GM12878 (cell line): ENCODE measurements at regions of chr17 and their contacts with region 1.

Region 1: GRCh38 chr17:78128551-78129350 is at the start of gene TMC6:
- DNase-seq: no peak
- ATAC-seq: peak; percentile 13
- H3K4me3 ChIP-seq: peak within 1 kb of the TSS; percentile 94
- H3K27ac ChIP-seq: peak within 1 kb of the TSS; percentile 95
- H3K4me1 ChIP-seq: peaks cover 61% of the 10 kb centered on the region
- H3K27me3 ChIP-seq: no peaks in the 10 kb centered on the region
- CTCF ChIP-seq: no peak
- EP300 ChIP-seq: peak in 1 of 2 experiments; percentile 9; a peak in 1 of 4 replicates
- POLR2A ChIP-seq: peak; percentile 89
- RAD21 ChIP-seq: no peak
- polyA plus RNA-seq, gene TMC6: 1.9 to 11.5 TPM

Region 2: DNA sequence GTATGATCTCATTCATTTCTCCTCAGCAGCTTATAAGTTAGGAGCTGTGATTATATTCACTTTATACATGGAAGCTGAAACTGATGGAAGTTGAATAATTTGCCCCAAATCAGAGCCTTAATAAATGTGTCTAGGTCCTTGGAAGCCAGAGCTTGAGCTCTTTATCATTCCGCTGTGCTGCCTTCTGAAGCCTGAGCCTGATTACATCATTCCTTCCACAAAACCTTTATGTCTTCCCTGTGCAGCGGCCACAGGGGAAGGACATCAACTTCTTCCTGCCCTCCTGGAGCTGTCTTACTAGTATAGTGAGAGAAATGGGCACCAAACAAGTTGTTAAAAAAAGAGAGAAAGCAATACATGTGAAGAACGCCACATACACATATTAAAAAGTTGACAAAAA is 163.4 kb before region 1 on chr17:
- CTCF ChIA-PET with region 1: no interaction called
- POLR2A ChIA-PET with region 1: no interaction called
- RAD21 ChIA-PET with region 1: no interaction called
- SMC1A ChIA-PET with region 1: no interaction called
- in situ Hi-C with region 1: no loop called
- intact Hi-C with region 1: no loop called
- DNase-seq: no peak
- ATAC-seq: no peak
- H3K4me3 ChIP-seq: no peak overlapping the region
- H3K27ac ChIP-seq: no peak overlapping the region
- H3K4me1 ChIP-seq: peaks cover 10% of the 10 kb centered on the region
- H3K27me3 ChIP-seq: no peaks in the 10 kb centered on the region
- CTCF ChIP-seq: no peak
- EP300 ChIP-seq: no peak
- POLR2A ChIP-seq: no peak
- RAD21 ChIP-seq: no peak

Region 3: GRCh38 chr17:78112518-78113226 is 16.1 kb before region 1 on chr17:
- CTCF ChIA-PET with region 1: interaction called, 24 read pairs
- POLR2A ChIA-PET with region 1: interaction called, 8 read pairs
- RAD21 ChIA-PET with region 1: interaction called, 6 read pairs
- SMC1A ChIA-PET with region 1: interaction called, 5 read pairs
- in situ Hi-C with region 1: no loop called
- intact Hi-C with region 1: loop called (anchors 2 kb)
- DNase-seq: no peak
- ATAC-seq: peak; percentile 84
- H3K4me3 ChIP-seq: no peak overlapping the region
- H3K27ac ChIP-seq: no peak overlapping the region; the same call in 1 of the 2 replicates
- H3K4me1 ChIP-seq: peaks cover 27% of the 10 kb centered on the region
- H3K27me3 ChIP-seq: no peaks in the 10 kb centered on the region
- CTCF ChIP-seq: peak; percentile 93 to 99 (median 96); a peak in 5 of 6 replicates
- EP300 ChIP-seq: no peak
- POLR2A ChIP-seq: peak; percentile 77
- RAD21 ChIP-seq: peak; percentile 96

Region 4: DNA sequence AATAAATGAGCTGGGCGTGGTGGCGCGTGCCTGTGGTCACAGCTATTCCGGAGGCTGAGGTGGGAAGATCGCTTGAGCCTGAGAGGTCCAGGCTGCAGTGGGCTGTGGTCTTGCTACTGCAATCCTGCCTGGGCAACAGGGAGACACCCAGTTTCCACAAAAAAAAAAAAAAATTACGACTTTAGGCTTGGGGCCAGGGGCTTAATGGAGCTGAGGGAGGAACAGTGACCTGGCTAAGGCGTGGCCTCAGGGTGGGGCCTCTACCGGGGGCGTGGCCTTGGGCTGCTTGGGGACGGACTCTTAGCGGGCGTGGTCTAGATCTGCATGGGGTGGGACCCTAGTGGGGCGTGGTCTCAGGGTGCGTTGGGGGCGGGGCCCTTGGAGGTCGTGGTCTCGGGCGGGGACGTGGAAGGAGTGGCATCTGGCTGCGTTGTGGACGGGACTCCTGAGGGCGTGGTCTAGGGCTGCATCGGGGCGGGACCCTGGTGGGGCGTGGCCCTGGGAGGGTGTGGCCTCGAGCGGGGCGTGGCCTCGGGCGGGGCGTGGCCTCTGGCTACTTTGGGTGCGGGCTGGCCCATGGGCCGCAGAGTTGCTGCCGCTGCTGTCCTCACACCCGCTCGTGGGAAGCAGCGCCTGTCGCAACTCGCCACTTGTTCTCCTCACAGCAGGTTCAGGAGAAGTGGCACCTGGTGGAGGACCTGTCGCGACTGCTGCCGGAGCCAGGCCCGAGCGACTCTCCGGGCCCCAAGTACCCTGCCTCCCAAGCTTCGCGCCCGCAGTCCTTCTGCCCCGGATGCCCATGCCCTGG is 11.6 kb after region 1 on chr17:
- CTCF ChIA-PET with region 1: interaction called, 66 read pairs
- POLR2A ChIA-PET with region 1: interaction called, 15 read pairs
- RAD21 ChIA-PET with region 1: interaction called, 26 read pairs
- SMC1A ChIA-PET with region 1: interaction called, 14 read pairs
- in situ Hi-C with region 1: no loop called
- intact Hi-C with region 1: no loop called
- DNase-seq: peak; percentile 90
- ATAC-seq: peak; percentile 90
- H3K4me3 ChIP-seq: no peak overlapping the region
- H3K27ac ChIP-seq: no peak overlapping the region
- H3K4me1 ChIP-seq: peaks cover 64% of the 10 kb centered on the region
- H3K27me3 ChIP-seq: no peaks in the 10 kb centered on the region
- CTCF ChIP-seq: no peak
- EP300 ChIP-seq: no peak
- POLR2A ChIP-seq: peak; percentile 87
- RAD21 ChIP-seq: no peak

Region 5: GRCh38 chr17:78147315-78147998 is 18.7 kb after region 1 on chr17:
- CTCF ChIA-PET with region 1: interaction called, 11 read pairs
- POLR2A ChIA-PET with region 1: interaction called, 15 read pairs
- RAD21 ChIA-PET with region 1: interaction called, 13 read pairs
- SMC1A ChIA-PET with region 1: interaction called, 6 read pairs
- in situ Hi-C with region 1: no loop called
- intact Hi-C with region 1: no loop called
- DNase-seq: peak; percentile 85
- ATAC-seq: peak; percentile 82
- H3K4me3 ChIP-seq: peak overlapping the region; percentile 10; the same call in 1 of the 2 replicates
- H3K27ac ChIP-seq: peak overlapping the region; percentile 96
- H3K4me1 ChIP-seq: peaks cover 70% of the 10 kb centered on the region
- H3K27me3 ChIP-seq: no peaks in the 10 kb centered on the region
- CTCF ChIP-seq: no peak
- EP300 ChIP-seq: peak; percentile 88 to 93; a peak in 3 of 4 replicates
- POLR2A ChIP-seq: peak; percentile 49; the same call in 1 of the 2 replicates
- RAD21 ChIP-seq: 0 out of 2 replicates have a peak, but pooled peaks have one; percentile 4

Region 6: DNA sequence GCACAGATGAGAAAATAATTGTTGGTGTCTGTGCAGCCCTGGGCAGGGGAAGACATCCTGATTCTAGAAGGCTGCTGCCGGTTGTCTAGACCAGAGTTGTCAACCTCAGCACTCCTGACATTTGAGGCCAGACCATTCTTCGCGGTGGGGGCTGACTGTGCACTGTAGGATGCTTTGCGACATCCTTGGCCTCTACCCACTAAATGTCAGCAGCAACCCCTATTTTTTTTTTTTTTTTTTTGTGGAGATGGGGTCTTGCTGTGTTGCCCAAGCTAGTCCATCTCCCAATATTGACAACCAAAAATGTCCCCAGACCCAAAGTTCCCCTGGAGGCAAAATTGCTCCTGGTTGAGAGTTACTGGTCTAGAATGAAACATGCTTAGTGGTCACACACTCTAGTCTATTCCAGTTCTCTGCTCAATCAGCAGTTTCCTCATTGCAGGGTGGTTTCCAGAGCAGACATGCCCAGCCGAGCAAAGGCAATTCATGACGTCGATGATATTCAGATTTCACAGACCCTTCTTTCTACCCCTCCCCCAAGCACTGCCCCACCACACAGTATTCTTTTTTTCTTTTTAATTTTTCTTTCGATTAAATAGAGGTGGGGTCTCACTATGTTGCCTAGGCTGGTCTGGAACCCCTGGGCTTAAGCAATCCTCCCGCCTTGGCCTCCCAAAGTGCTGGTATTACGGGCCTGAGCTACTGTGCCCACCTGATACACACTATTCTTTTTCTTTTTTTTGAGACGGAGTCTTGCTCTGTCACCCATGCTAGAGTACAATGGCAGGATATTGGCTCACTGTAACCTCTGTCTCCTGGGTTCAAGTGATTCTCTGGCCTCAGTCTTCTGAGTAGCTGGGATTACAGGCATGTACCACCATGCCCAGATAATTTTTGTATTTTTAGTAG is 26.4 kb after region 1 on chr17:
- CTCF ChIA-PET with region 1: interaction called, 4 read pairs
- POLR2A ChIA-PET with region 1: interaction called, 9 read pairs
- RAD21 ChIA-PET with region 1: interaction called, 12 read pairs
- SMC1A ChIA-PET with region 1: interaction called, 4 read pairs
- in situ Hi-C with region 1: no loop called
- intact Hi-C with region 1: no loop called
- DNase-seq: peak; percentile 97
- ATAC-seq: peak; percentile 80
- H3K4me3 ChIP-seq: no peak overlapping the region
- H3K27ac ChIP-seq: peak overlapping the region; percentile 93
- H3K4me1 ChIP-seq: peaks cover 64% of the 10 kb centered on the region
- H3K27me3 ChIP-seq: no peaks in the 10 kb centered on the region
- CTCF ChIP-seq: no peak
- EP300 ChIP-seq: peak; percentile 61 to 88; a peak in 3 of 4 replicates
- POLR2A ChIP-seq: peak; percentile 76
- RAD21 ChIP-seq: no peak